ENCODE measurements at regions of chr9 and their contacts with region 1.

Region 1: DNA sequence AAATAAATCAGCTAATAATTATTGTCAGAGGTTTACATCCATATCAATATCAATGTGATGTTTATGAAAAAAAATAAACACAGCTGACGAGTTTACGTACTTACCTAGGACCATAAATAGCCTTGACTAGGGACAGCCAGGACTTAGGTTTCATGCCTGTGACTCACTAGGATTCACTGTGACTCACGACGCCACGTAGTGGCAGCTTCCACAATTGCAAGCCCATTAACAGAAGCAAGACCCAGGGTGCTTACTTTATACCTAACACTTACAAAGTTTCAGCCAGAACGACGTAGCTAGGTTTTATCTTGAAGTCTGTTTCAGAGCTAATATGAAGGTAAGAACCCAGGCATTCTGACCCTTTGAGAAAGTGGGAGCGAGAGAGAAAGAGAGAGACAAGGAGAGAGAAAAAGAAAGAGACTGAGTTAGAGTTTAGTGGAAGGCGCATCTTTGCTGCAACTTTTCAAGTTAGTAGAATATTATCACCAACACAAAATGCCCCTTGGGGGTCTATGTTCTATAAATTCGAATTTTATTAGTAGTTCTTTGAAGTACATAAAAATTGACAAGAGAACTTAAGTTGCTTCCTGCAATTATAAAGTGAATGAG is 191.2 kb downstream of the GNA14 start:
- DNase-seq: peak; percentile 88
- ATAC-seq: peak; percentile 70
- H3K4me3 Mint-ChIP-seq: no peak overlapping the region
- H3K27ac Mint-ChIP-seq: no peak overlapping the region
- H3K4me1 Mint-ChIP-seq: peaks cover 13% of the 10 kb centered on the region
- H3K27me3 Mint-ChIP-seq: peaks cover 2% of the 10 kb centered on the region

Region 2: GRCh38 chr9:77433675-77434445 is 23.1 kb before region 1 on chr9:
- CTCF ChIA-PET with region 1: interaction called, 84 read pairs
- POLR2A ChIA-PET with region 1: no interaction called
- DNase-seq: peak; percentile 67
- ATAC-seq: peak; percentile 90
- H3K4me3 Mint-ChIP-seq: no peak overlapping the region
- H3K27ac Mint-ChIP-seq: no peak overlapping the region
- H3K4me1 Mint-ChIP-seq: peaks cover 2% of the 10 kb centered on the region
- H3K27me3 Mint-ChIP-seq: no peaks in the 10 kb centered on the region

Region 3: GRCh38 chr9:77475641-77476473 is 18.9 kb after region 1 on chr9:
- CTCF ChIA-PET with region 1: interaction called, 54 read pairs
- POLR2A ChIA-PET with region 1: interaction called, 5 read pairs
- DNase-seq: peak; percentile 79
- ATAC-seq: peak; percentile 99
- H3K4me3 Mint-ChIP-seq: peak overlapping the region; percentile 53
- H3K27ac Mint-ChIP-seq: peak overlapping the region; percentile 96
- H3K4me1 Mint-ChIP-seq: peaks cover 42% of the 10 kb centered on the region
- H3K27me3 Mint-ChIP-seq: no peaks in the 10 kb centered on the region

Region 4: DNA sequence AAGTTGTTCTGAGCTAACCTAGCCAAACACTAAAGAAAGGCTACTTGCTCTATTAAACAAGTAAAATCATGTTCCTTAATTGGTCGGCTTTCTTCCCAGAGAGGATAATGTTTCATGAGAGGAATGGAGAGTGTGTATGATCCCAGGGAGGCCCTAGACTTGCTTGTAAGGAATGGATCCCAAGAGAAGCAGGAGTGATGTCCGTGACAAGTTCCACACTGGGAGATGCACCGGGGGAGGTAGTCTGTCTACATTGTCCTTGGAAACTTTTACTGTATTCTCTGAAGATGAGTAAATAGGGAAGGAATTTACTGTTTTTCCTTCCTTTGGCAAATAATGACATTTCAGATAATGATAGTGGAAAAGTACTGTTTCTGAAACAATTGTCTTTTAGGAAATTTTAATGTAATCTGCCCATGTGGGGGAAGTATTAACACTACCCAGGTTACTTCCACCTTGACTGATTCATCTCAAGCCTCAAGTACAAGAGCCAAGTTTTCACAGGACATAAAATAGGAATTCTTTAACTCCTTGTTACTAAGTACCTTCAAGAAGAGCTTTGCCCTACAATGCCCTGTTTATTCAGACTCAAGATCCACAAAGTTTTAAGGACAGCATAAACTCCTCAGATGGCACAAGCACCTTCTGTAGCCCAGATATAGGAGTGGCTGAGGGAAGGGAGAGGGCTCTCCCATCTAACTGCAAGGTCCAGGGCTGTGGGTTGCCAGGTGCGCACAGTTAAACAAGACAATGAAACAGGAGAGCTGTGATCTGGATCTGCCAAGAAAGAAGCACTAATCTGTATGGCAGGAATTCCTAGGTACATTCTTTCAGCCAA is 39.1 kb after region 1 on chr9:
- CTCF ChIA-PET with region 1: interaction called, 137 read pairs
- POLR2A ChIA-PET with region 1: no interaction called
- DNase-seq: no peak
- ATAC-seq: no peak
- H3K4me3 Mint-ChIP-seq: no peak overlapping the region
- H3K27ac Mint-ChIP-seq: no peak overlapping the region
- H3K4me1 Mint-ChIP-seq: no peaks in the 10 kb centered on the region
- H3K27me3 Mint-ChIP-seq: peaks cover 4% of the 10 kb centered on the region